CD14-positive monocyte (primary cell): ENCODE measurements at regions of chr15 and their contacts with region 1.

Region 1: GRCh38 chr15:40506964-40507571 is 36.3 kb downstream of the CHST14 start:
- DNase-seq: peak; percentile 25 to 45 (median 42)
- H3K4me3 ChIP-seq: peak overlapping the region in 1 of 3 experiments; percentile 49
- H3K4me3 Mint-ChIP-seq: peak overlapping the region; percentile 64 to 81
- H3K27ac ChIP-seq: no peak overlapping the region
- H3K27ac Mint-ChIP-seq: no peak overlapping the region
- H3K4me1 ChIP-seq: peaks cover 19 to 22% of the 10 kb centered on the region in 2 donors
- H3K4me1 Mint-ChIP-seq: peaks cover 23% of the 10 kb centered on the region
- H3K27me3 ChIP-seq: peaks cover 22 to 49% of the 10 kb centered on the region in 2 donors
- H3K27me3 Mint-ChIP-seq: peaks cover 60 to 66% (median 60%) of the 10 kb centered on the region in 3 donors
- CTCF ChIP-seq: peak; percentile 72

Region 2: DNA sequence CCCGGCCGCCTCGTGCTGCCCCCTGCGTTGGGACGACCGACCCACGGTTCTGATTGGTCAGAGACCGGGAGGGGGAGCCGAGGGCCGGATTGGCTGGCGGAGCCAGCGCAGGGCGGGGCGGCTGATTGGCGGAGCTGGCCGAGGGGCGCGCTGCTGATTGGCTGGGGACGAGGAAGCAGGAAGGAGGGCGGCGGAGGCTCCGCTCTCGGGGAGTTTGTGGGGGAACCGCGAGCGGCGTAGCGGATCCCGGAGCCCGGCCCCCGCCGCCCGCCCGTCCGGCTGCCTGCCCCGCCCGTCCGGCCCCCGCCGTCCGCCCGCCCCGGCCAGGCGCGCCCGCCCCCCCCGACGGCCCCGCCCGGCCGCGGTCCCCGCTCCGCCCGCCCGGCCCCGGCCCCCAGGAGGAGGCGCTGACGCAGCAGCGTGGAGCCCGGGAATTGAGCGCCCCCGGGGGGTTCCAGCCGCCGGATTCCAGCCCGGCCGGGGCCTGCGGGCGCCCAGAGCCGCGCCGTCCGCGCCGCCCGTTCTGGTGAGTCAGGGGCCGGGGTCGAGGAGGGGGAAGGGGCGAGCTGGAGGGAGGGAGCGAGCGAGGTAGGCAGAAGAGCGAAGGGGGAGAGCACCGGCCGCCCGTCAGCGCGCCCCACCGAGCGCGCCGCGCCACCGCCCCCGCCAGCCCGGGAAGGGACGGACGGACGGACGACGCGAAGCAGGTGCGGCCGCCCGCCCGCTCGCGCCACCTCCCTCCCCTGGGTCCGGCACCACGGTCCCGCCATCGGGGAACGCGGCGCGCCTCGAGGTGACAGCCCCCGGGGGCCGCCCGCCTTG is 66.1 kb before region 1 on chr15 and contains the start of gene BAHD1:
- intact Hi-C with region 1: loop called in 1 of 2 experiments (anchors 5 kb)
- DNase-seq: peak; percentile 87 to 91 (median 88)
- H3K4me3 ChIP-seq: peak within 1 kb of the TSS; percentile 45 to 84 (median 59)
- H3K4me3 Mint-ChIP-seq: peak within 1 kb of the TSS; percentile 95 to 99
- H3K27ac ChIP-seq: peak within 1 kb of the TSS in 1 of 2 donors; percentile 0
- H3K27ac Mint-ChIP-seq: peak within 1 kb of the TSS in 5 of 7 donors; percentile 22 to 85 (median 61)
- H3K4me1 ChIP-seq: peaks cover 24 to 42% of the 10 kb centered on the region in 2 donors
- H3K4me1 Mint-ChIP-seq: peaks cover 49% of the 10 kb centered on the region
- H3K27me3 ChIP-seq: peaks cover 28 to 53% of the 10 kb centered on the region in 2 donors
- H3K27me3 Mint-ChIP-seq: peaks cover 60 to 75% (median 61%) of the 10 kb centered on the region in 3 donors
- CTCF ChIP-seq: no peak
- polyA plus RNA-seq, gene BAHD1: 0.67 to 8.9 (median 0.79) TPM

Region 3: GRCh38 chr15:40470423-40471104 is 36.5 kb before region 1 on chr15 and contains the start of gene CHST14:
- intact Hi-C with region 1: no loop called
- DNase-seq: peak; percentile 69 to 83 (median 71)
- H3K4me3 ChIP-seq: peak within 1 kb of the TSS; percentile 52 to 91 (median 72)
- H3K4me3 Mint-ChIP-seq: peak within 1 kb of the TSS; percentile 89 to 93
- H3K27ac ChIP-seq: peak within 1 kb of the TSS; percentile 76 to 84
- H3K27ac Mint-ChIP-seq: peak within 1 kb of the TSS; percentile 82 to 97 (median 94)
- H3K4me1 ChIP-seq: peaks cover 13 to 34% of the 10 kb centered on the region in 2 donors
- H3K4me1 Mint-ChIP-seq: peaks cover 27% of the 10 kb centered on the region
- H3K27me3 ChIP-seq: no peaks in the 10 kb centered on the region
- H3K27me3 Mint-ChIP-seq: peaks cover 2 to 5% (median 2%) of the 10 kb centered on the region in 3 donors
- CTCF ChIP-seq: no peak
- polyA plus RNA-seq, gene CHST14: 0.85 to 5.2 (median 1.2) TPM